Head of caudate nucleus (tissue), 42 donors: ENCODE measurements at regions of chr19 and their contacts with region 1.

Region 1: DNA sequence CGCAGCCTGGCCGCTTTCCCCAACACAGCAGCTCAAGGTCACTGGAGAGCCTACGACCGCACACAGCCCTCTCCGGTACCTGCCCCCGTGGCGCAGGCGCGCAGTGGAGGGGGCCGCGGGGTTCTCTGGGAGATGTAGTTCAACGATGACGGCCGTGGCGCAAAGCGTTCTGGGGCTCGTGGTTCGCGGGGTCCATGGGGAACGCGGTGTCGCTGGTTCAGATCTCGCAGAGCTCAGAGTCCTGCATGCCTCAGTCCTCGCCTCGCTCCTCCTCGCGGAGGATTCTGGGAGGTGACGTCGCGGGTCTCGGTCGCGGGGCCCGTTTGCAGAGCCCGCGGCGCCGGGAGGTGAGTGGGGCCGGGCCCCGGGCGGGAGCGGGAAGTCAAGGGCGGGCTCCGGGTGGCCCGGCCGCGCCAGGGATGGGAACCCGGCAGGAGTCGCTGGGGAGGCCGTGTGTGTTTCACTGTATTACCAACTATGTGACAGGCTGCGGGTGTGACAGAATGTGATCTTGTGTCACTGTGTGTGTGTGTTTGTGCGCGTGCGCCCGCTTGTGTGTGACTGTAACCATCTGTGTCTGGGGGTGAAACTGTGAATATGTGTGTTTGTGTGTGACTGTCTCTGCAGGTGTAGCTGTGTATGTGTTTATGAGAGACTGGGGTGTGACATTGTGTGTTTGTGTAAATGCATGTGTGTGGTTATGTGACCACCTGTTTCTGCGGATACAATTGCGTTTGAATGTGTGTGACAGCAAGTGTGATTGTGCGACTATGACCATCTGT is at the start of gene ZNF527:
- DNase-seq: peak; percentile 97 to 100 (median 99)

Region 2: DNA sequence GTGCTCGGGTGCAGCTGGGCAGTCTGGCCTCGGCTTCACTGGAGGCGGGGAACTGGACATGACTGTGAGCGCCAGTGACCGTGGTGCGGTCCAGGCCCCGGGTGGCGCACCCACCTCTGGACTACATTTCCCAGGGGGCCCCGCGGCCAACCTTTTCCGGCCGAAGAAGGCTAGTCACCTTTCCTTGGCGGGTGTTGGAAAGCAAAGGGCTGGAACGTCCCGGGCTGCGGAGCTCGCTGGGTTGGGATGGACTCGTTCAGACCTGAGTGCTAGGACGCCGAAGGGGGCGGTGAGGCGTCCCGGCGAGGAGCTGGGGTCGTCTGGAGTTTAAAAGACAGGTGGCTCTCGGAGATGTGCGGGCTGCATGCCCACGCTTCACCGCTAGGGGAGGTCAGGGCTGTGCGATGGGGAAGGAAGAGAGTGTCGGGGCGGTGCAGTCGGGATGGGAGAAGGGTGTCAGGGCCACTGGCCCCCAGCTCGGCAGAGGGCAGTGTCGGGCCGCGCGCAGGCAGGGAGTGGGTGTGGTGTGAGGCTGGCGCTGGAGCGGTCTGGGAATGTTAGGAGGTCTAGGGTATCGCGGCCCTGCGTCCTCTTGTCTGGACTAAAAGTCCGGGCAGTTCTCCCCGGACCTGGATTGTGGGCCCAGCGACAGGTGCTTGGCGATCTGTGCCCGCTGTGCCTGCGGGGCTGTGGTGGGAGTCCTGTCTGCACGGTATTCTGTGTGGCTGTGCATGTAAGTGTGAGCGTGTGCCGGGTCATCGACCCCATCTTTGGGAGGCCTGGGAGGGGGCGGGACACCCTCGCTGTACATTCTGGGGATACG is 397.8 kb before region 1 on chr19:
- intact Hi-C with region 1: loop called (anchors 5 kb)
- DNase-seq: peak; percentile 79 to 95 (median 89)

Region 3: GRCh38 chr19:37334179-37335071 is 36.6 kb before region 1 on chr19:
- intact Hi-C with region 1: loop called (anchors 2 kb)
- DNase-seq: peak; percentile 94 to 99 (median 98)

Region 4: DNA sequence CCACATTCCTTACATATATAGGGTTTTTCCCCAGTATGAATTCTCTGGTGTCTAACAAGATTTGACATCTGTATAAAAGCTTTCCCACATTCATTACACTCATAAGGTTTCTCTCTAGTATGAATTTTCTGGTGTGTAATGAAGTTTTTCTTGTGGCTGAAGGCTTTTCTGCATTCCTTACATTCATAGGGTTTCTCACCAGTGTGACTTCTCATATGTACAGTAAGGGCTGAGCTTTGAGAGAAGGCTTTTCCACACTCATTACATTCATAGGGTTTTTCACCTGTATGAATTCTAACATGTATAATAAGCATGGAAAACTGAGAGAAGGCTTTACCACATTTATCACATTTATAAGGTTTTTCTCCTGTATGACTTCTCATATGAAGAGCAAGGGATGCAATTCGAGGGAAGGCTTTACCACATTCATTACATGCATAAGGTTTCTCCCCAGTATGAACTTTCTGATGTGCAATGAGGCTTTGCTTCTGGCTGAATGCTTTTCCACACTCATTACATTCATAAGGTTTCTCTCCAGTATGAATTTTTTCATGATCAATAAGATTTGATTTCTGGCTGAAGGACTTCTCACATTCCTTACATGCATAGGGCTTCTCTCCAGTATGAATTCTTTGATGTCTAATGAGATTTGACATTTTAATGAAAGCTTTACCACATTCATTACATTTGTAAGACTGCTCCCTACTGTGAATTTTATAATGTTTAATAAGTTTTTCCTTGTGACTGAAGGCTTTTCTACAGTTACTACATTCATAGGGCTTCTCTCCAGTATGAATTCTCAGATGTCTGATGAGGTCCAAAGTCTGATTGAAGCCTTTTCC is 42.4 kb after region 1 on chr19:
- intact Hi-C with region 1: no loop called
- DNase-seq: no peak

Region 5: DNA sequence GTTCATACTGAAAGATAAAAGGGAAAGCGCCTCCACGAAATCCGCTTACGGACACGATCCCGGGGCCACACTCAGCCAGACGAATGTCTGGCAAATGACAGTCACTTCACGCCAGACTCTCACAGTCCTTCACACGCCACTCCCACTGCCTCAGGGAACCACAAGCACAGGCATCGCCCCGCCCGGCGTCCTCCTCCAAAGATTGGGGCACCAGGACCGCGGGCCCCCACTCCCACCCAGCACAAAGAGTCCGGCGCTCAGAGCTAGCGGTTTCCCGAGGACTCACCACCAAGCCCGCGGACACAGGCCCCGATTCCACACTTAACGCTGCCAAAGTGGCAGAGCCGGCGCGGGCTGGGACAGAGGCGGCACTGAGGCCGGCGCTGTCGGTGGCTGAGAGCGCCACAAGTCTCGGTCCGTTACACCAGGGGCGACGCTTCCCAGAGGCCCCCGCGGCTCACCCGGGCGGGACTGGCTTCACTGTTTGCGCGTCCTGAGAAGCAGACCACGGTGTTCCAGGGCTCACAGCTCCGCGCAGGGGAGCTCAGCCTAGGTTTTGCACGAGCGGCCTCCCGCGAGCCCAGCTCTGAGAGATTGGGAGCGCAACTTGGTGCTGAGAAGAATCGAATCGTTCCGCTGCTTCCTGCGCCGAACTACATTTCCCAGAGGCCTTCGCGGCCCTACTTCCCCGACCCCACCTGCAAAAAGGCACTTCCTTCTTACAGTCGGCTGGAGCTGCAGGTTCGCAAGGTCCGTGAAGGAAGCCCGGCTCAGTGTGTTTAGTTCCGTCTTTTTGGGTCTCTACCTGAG is 95.9 kb after region 1 on chr19 and contains the start of gene ZNF569:
- intact Hi-C with region 1: loop called (anchors 5 kb)
- DNase-seq: peak; percentile 90 to 98 (median 95)